ENCODE measurements at regions of chr5 and their contacts with region 1.

Region 1: GRCh38 chr5:133273661-133274596 is 222.1 kb downstream of the HSPA4 start:
- DNase-seq: no peak
- H3K4me3 ChIP-seq: no peak overlapping the region
- CTCF ChIP-seq: no peak

Region 2: DNA sequence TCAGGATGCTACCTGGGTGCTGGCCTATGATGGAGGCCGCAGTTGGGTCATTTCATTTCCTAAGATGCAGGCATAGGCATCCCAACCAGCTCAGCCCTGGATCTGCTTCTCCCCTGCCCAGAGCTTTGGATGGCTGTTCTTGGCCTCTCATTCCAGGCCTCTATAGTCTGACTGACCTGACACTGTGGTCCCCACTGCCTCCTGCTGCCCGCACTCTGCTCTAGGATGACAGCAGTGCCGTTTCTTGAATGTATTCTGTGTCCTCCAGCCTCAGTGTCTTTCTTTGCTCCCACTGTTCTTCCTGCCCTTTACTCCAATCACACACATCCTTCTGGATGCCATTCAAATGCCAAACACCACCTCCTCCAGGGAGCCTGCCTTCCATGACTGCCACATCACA is 13.6 kb after region 1 on chr5:
- CTCF ChIA-PET with region 1: interaction called, 12 read pairs
- POLR2A ChIA-PET with region 1: no interaction called
- DNase-seq: no peak
- H3K4me3 ChIP-seq: no peak overlapping the region
- CTCF ChIP-seq: peak; percentile 78

Measured in AG04449 (cell line).